ENCODE measurements at regions of chrX and their contacts with region 1.

Region 1: DNA sequence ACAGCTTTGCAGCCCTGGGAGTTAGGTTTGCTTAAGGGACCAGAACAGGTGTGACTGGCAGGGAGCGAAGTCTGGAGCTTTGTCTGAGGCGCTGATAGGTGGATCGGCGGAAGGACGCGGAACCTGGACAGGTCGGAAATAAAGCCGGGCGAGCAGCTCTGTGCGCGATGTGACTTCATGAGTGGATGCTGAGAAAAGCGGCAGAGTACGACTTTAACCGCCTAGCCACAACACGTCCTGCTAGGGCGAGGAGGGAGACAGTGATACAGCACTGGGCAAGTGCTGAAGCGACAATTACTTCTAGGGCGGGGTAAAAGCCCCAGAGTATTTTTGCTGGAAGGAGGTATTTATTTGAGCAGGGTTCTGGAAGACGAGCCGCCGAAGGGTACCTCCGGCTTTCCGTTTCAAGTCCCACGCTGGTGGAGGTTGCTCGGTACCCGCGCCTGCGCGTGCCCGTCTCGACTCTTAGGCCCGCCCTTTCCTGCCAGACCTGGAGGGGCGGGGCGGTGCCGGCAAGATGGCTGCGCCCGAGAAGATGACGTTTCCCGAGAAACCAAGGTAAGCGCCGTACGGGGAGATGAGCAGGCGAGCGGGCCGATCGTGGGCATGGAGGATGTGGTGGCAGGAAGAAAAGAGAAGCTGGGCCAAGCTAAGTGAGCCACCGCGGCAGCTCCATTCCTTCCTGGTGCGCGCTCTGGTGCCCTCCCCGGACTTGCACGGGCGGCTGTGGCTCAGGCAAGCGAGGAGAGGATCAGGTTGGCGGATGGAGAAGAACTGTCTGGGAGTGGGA is at the start of gene ZRSR2:
- DNase-seq: peak; percentile 68 to 95 (median 91)
- ATAC-seq: peak; percentile 95
- H3K4me3 ChIP-seq: peak within 1 kb of the TSS; percentile 92
- H3K4me3 Mint-ChIP-seq: peak within 1 kb of the TSS in 1 of 10 donors; percentile 48
- H3K27ac ChIP-seq: peak within 1 kb of the TSS; percentile 93
- H3K27ac Mint-ChIP-seq: no peak within 1 kb of the TSS
- H3K4me1 ChIP-seq: peaks cover 9 to 10% of the 10 kb centered on the region in 2 donors
- H3K4me1 Mint-ChIP-seq: peaks cover 0 to 36% (median 24%) of the 10 kb centered on the region in 7 donors
- H3K27me3 ChIP-seq: no peaks in the 10 kb centered on the region
- H3K27me3 Mint-ChIP-seq: no peaks in the 10 kb centered on the region
- total RNA-seq, gene ZRSR2: 20.8 to 31.7 (median 25.4) TPM

Region 2: GRCh38 chrX:15151267-15152186 is 638.6 kb before region 1 on chrX:
- CTCF ChIA-PET with region 1: no interaction called
- POLR2A ChIA-PET with region 1: no interaction called
- intact Hi-C with region 1: loop called in 1 of 2 experiments (anchors 10 kb)
- DNase-seq: peak in 4 of 9 donors; percentile 14 to 22 (median 15)
- ATAC-seq: peak; percentile 45
- H3K4me3 ChIP-seq: no peak overlapping the region
- H3K4me3 Mint-ChIP-seq: peak overlapping the region in 9 of 10 donors; percentile 11 to 66 (median 49)
- H3K27ac ChIP-seq: no peak overlapping the region
- H3K27ac Mint-ChIP-seq: peak overlapping the region in 7 of 9 donors; percentile 9 to 93 (median 62)
- H3K4me1 ChIP-seq: peaks cover 5 to 11% of the 10 kb centered on the region in 2 donors
- H3K4me1 Mint-ChIP-seq: peaks cover 7 to 52% (median 25%) of the 10 kb centered on the region in 7 donors
- H3K27me3 ChIP-seq: no peaks in the 10 kb centered on the region
- H3K27me3 Mint-ChIP-seq: peaks cover 0 to 3% (median 0%) of the 10 kb centered on the region in 5 donors

Region 3: GRCh38 chrX:15493118-15493962 is 296.8 kb before region 1 on chrX and contains the start of gene PIR:
- CTCF ChIA-PET with region 1: no interaction called
- POLR2A ChIA-PET with region 1: no interaction called
- intact Hi-C with region 1: loop called in 1 of 2 experiments (anchors 10 kb)
- DNase-seq: peak in 8 of 9 donors; percentile 3 to 72 (median 16)
- ATAC-seq: peak; percentile 88
- H3K4me3 ChIP-seq: peak within 1 kb of the TSS; percentile 46
- H3K4me3 Mint-ChIP-seq: peak within 1 kb of the TSS; percentile 75 to 85 (median 82)
- H3K27ac ChIP-seq: no peak within 1 kb of the TSS
- H3K27ac Mint-ChIP-seq: peak within 1 kb of the TSS in 1 of 9 donors; percentile 58
- H3K4me1 ChIP-seq: no peaks in the 10 kb centered on the region
- H3K4me1 Mint-ChIP-seq: peaks cover 2 to 18% (median 9%) of the 10 kb centered on the region in 7 donors
- H3K27me3 ChIP-seq: no peaks in the 10 kb centered on the region
- H3K27me3 Mint-ChIP-seq: peaks cover 0 to 6% (median 4%) of the 10 kb centered on the region in 5 donors
- total RNA-seq, gene PIR: 0.49 to 4.6 (median 0.70) TPM in 3 of 5 experiments, not detected in the others

Region 4: DNA sequence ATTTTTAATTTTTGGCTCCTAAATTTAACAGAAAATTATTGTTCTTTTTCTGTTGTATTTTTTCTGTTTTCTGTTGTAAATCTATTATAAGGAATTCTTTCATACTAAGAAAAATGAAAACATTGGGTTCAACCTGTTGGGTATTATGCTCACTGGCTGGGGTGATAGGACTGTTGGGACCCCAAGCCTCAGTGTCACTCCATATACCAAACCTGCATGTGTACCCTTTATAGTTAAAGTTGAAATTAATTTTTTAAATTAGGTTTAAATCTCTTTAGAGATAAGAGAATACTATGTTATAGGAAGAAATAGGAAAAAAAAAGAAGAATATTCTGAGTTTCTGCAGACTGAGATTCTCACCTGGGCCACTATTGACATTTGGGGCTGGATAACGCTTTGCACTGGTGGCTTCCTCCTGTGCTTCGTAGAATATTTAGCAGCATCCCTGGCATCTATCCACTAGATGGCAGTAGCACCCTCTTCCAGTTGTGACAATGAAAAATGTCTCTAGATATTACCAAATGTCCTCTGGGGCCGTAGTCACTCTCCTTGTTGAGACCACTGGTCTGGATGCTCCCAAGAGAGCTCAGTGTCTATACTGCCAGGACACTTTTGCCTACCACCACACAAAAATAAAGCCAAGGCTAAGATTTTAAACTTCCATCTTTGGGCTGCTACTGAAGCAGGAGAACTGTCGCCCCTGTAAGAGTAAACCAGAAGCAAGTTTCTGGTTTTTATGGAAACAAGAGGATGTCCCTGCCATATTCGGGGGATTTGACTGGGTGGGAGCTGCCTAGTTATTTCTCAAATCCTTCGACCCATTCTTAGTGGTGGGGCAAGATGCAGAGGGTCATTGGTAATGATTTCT is 103.1 kb before region 1 on chrX:
- CTCF ChIA-PET with region 1: no interaction called
- POLR2A ChIA-PET with region 1: no interaction called
- intact Hi-C with region 1: loop called in 1 of 2 experiments (anchors 1 kb)
- DNase-seq: peak; percentile 9 to 78 (median 59)
- ATAC-seq: peak; percentile 95
- H3K4me3 ChIP-seq: no peak overlapping the region
- H3K4me3 Mint-ChIP-seq: no peak overlapping the region
- H3K27ac ChIP-seq: no peak overlapping the region
- H3K27ac Mint-ChIP-seq: peak overlapping the region in 7 of 9 donors; percentile 29 to 86 (median 67)
- H3K4me1 ChIP-seq: no peaks in the 10 kb centered on the region
- H3K4me1 Mint-ChIP-seq: peaks cover 0 to 14% (median 13%) of the 10 kb centered on the region in 7 donors
- H3K27me3 ChIP-seq: no peaks in the 10 kb centered on the region
- H3K27me3 Mint-ChIP-seq: no peaks in the 10 kb centered on the region

Region 5: DNA sequence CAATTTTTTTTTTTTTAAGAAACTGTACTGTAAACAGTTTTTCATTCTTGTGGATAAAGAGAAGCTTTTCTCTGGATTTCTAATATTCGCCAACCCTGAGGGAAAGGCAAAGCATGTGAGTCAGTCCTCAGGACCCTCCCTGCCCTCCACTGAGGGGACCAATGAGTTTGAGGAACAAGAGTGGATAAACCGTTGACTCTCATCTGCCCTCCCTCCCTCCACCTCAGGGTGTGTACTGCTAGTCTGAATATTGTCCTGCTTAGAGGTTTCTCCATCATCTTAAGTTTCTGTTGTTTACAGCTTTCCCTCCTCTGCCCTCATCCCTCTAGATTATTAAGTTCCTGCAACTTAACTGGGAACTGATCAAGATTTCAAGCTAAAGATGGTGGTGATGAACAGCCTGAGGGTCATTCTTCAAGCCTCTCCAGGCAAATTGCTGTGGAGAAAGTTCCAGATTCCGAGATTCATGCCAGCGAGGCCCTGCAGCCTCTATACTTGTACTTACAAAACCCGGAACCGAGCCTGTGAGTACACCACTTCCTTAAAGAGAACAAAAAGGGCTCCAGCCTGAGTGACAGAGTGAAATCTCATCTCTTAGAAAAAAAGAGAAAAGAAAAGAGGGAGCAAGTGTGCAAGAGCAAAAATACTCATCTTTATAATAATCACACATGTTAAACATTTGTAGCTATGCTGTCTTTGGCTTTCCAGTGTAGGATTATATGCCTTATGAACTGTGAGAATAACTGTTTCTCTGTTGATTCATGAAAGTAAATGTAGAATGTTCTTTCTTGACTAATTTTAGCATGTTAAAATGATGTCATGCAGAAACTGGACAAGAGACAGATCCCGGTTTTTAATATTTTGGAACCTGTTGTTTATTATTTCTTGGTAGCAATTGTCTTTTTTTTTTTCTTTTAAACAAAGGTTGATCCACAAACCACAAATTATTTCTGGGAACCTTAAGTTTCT is 40.2 kb before region 1 on chrX:
- CTCF ChIA-PET with region 1: no interaction called
- POLR2A ChIA-PET with region 1: interaction called, 19 read pairs
- intact Hi-C with region 1: loop called (anchors 1 kb)
- DNase-seq: peak in 7 of 9 donors; percentile 20 to 61 (median 52)
- ATAC-seq: peak; percentile 55
- H3K4me3 ChIP-seq: peak overlapping the region; percentile 43
- H3K4me3 Mint-ChIP-seq: peak overlapping the region; percentile 60 to 86 (median 77)
- H3K27ac ChIP-seq: peak overlapping the region; percentile 89
- H3K27ac Mint-ChIP-seq: peak overlapping the region; percentile 92 to 99 (median 97)
- H3K4me1 ChIP-seq: peaks cover 51 to 55% of the 10 kb centered on the region in 2 donors
- H3K4me1 Mint-ChIP-seq: peaks cover 36 to 97% (median 82%) of the 10 kb centered on the region in 7 donors
- H3K27me3 ChIP-seq: no peaks in the 10 kb centered on the region
- H3K27me3 Mint-ChIP-seq: no peaks in the 10 kb centered on the region

Region 6: GRCh38 chrX:15815779-15816437 is 25.7 kb after region 1 on chrX:
- CTCF ChIA-PET with region 1: no interaction called
- POLR2A ChIA-PET with region 1: no interaction called
- intact Hi-C with region 1: loop called (anchors 1 to 2 kb)
- DNase-seq: peak in 5 of 9 donors; percentile 11 to 32 (median 18)
- ATAC-seq: peak; percentile 82
- H3K4me3 ChIP-seq: no peak overlapping the region
- H3K4me3 Mint-ChIP-seq: peak overlapping the region in 5 of 10 donors; percentile 13 to 63 (median 39)
- H3K27ac ChIP-seq: no peak overlapping the region
- H3K27ac Mint-ChIP-seq: peak overlapping the region; percentile 24 to 88 (median 52)
- H3K4me1 ChIP-seq: peaks cover 14 to 26% of the 10 kb centered on the region in 2 donors
- H3K4me1 Mint-ChIP-seq: peaks cover 6 to 47% (median 36%) of the 10 kb centered on the region in 7 donors
- H3K27me3 ChIP-seq: no peaks in the 10 kb centered on the region
- H3K27me3 Mint-ChIP-seq: no peaks in the 10 kb centered on the region

Region 7: DNA sequence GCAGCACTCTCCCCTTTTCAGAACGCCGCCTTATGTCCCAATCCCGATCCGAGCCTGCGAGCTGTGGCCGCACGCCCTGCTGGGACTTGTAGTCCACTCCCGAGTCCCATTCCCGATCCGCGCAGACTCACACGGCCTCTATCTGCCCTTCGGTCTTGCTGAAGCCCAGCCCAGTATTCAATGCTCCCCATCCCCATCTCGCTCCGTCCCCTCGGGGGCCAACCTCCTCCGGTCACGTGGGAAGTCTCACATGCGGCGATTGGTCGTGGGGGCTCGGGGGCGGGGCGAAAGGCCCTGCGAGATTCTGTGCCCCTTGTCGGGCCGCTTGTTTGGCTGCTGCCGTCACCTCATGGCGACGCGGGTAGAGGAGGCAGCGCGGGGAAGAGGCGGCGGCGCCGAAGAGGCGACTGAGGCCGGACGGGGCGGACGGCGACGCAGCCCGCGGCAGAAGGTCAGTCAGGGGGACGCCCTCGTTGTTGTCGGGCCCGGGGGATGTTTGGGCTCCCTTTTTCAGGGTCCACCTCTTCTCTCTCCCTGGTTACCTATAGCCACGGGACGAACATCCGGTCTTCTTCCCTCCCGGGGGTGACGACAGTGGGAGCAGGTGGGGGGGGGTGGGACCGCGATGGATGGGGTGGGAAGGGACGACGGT is 996.1 kb after region 1 on chrX and contains the start of gene TXLNG:
- CTCF ChIA-PET with region 1: no interaction called
- POLR2A ChIA-PET with region 1: no interaction called
- intact Hi-C with region 1: loop called in 1 of 2 experiments (anchors 1 kb)
- DNase-seq: peak; percentile 81 to 98 (median 97)
- ATAC-seq: peak; percentile 97
- H3K4me3 ChIP-seq: peak within 1 kb of the TSS; percentile 94
- H3K4me3 Mint-ChIP-seq: peak within 1 kb of the TSS; percentile 95 to 99 (median 97)
- H3K27ac ChIP-seq: peak within 1 kb of the TSS; percentile 88
- H3K27ac Mint-ChIP-seq: peak within 1 kb of the TSS; percentile 78 to 94 (median 90)
- H3K4me1 ChIP-seq: peaks cover 0 to 3% of the 10 kb centered on the region in 2 donors
- H3K4me1 Mint-ChIP-seq: peaks cover 4 to 42% (median 12%) of the 10 kb centered on the region in 7 donors
- H3K27me3 ChIP-seq: no peaks in the 10 kb centered on the region
- H3K27me3 Mint-ChIP-seq: no peaks in the 10 kb centered on the region
- total RNA-seq, gene TXLNG: 11.9 to 23.1 (median 17.3) TPM

Measured in naive thymus-derived CD4-positive, alpha-beta T cell (primary cell).